A673 (cell line): ENCODE measurements at regions of chr12 and their contacts with region 1.

Region 1: DNA sequence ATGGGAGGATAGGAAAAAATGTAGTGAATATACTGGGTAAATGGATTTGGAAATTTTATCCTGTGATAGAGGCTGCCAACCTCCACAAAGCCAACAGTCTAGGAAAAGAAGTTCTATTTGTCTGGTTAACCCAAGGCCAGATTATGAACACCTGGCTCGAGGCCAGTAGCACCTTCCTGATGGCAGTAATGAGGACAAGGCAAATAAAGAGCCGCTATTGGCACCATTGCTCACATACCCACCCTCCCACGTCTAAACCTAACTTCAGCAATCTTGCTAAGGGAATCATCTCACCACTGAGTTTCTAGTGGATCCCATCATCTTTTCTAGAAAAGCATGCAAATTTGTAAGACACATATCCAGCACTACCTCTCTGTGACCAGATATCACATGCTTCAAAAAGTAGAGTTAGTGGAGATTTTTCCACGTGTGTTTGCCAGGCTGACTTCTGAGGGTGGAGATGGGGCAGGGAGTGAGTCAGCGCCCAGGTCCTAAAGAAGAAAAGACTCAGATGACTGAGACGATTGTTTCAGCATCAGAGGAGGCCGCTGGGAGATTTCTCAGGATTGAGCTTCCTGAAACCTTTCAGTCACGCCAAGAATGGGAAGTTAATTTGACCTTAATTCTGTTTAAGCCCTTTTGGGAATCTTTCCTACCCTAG is 362.9 kb downstream of the EMP1 start:
- DNase-seq: no peak
- H3K4me3 ChIP-seq: no peak overlapping the region
- H3K27ac ChIP-seq: no peak overlapping the region
- H3K4me1 ChIP-seq: no peaks in the 10 kb centered on the region
- H3K27me3 ChIP-seq: peaks cover 57% of the 10 kb centered on the region
- CTCF ChIP-seq: no peak

Region 2: DNA sequence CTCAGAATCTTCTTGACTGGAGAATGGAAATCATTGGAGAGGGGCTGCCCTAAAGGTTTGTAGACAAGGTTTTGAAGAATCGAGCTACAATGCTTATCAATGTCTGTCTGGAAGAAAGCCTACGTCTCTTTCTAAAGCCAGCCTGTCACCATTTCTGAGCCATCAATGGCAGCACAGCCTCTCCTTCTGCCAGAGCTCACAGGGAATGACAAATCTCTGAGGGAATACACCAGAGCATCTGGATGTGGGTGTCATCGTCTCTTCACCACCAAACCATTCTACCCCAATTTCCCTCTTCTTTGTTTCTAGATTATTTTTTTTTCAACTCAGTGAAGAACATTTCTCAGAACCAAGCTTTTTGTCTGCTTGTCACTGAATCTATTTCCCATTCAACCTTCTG is 13.2 kb before region 1 on chr12:
- CTCF ChIA-PET with region 1: no interaction called
- POLR2A ChIA-PET with region 1: no interaction called
- intact Hi-C with region 1: loop called (anchors 1 kb)
- DNase-seq: no peak
- H3K4me3 ChIP-seq: no peak overlapping the region
- H3K27ac ChIP-seq: no peak overlapping the region
- H3K4me1 ChIP-seq: no peaks in the 10 kb centered on the region
- H3K27me3 ChIP-seq: peaks cover 73% of the 10 kb centered on the region
- CTCF ChIP-seq: no peak

Region 3: GRCh38 chr12:13772264-13772663 is 212.8 kb after region 1 on chr12:
- CTCF ChIA-PET with region 1: no interaction called
- POLR2A ChIA-PET with region 1: no interaction called
- intact Hi-C with region 1: no loop called
- DNase-seq: no peak
- H3K4me3 ChIP-seq: no peak overlapping the region
- H3K27ac ChIP-seq: no peak overlapping the region
- H3K4me1 ChIP-seq: no peaks in the 10 kb centered on the region
- H3K27me3 ChIP-seq: peaks cover 21% of the 10 kb centered on the region
- CTCF ChIP-seq: no peak